SK-N-SH (cell line): ENCODE measurements at regions of chr18 and their contacts with region 1.

Region 1: DNA sequence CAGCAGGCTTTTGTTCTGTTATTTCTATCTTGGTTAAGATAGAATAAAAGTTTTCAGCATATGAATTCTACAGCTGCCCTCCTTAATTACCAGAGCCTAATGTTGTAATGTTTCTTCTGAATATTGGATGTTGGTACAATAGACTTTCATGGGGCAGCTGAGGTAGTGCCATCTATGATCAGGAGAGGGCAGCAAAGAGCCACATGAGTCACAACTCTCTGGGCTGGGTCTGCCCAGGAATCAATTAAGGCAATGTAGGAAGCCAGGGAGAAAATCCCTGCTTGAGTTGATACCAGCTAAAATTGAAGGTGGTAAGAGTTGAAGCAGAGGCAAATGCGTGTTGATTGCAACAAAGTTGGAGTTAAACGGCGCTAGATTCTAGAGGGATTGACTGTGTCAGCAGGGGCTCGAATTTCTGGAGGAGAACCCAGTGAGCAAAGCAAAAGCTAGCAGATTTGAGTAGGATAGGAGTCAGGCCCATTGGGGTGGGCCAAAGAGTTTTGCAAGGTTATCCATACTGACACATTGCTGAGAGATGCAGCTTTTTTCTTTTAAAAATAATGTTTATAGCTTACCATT is 10.6 kb upstream of the MC5R start:
- DNase-seq: peak; percentile 77
- H3K4me3 ChIP-seq: no peak overlapping the region
- H3K27ac ChIP-seq: no peak overlapping the region
- H3K4me1 ChIP-seq: no peaks in the 10 kb centered on the region
- H3K27me3 ChIP-seq: peaks cover 35% of the 10 kb centered on the region; the same call in 1 of the 2 replicates
- CTCF ChIP-seq: peak; percentile 80
- EP300 ChIP-seq: no peak
- RAD21 ChIP-seq: peak; percentile 76

Region 2: GRCh38 chr18:13800505-13801259 is 12.7 kb before region 1 on chr18:
- CTCF ChIA-PET with region 1: interaction called, 38 read pairs
- POLR2A ChIA-PET with region 1: no interaction called
- DNase-seq: peak; percentile 76
- H3K4me3 ChIP-seq: peak overlapping the region; percentile 29 to 52
- H3K27ac ChIP-seq: no peak overlapping the region
- H3K4me1 ChIP-seq: peaks cover 0 to 8% of the 10 kb centered on the region in 2 experiments; a peak in 1 of 4 replicates
- H3K27me3 ChIP-seq: peaks cover 35% of the 10 kb centered on the region
- CTCF ChIP-seq: peak; percentile 41
- EP300 ChIP-seq: no peak
- RAD21 ChIP-seq: peak; percentile 61

Region 3: DNA sequence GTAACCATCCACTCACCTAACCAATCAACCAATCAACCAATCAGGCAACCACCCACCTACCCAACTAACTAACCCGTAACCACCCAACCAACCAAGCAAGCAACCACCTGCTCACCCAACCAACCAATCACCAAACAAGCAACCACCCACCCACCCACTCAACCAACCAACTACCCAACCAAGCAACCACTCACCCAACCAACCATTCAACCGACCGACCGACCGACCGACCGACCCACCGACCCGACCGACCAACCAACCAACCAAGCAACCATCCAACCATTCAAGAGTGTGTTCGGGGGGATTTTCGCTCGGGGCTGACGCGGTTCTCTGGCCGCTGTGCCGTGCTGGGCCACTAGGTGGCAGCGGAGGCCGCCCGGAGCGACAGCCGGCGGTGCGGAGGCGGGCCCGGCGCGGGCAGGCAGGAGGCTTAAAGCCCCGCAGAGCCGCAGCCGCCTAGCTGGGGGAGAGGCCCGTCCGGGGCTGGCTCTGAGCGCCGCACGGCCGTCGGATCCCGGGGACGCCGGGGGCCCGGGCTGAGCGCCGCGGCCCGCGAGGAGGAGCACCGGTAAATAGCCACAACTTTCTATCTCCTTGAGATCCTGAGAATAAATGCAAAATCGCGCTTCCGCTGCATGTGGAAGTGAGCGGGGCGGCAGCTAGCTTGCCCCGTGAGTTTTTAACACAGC is 10.5 kb after region 1 on chr18 and contains the start of gene MC5R:
- CTCF ChIA-PET with region 1: interaction called, 22 read pairs
- POLR2A ChIA-PET with region 1: no interaction called
- DNase-seq: peak; percentile 92
- H3K4me3 ChIP-seq: peak within 1 kb of the TSS; percentile 46 to 66
- H3K27ac ChIP-seq: no peak within 1 kb of the TSS
- H3K4me1 ChIP-seq: no peaks in the 10 kb centered on the region; a peak in 1 of 4 replicates
- H3K27me3 ChIP-seq: peaks cover 63% of the 10 kb centered on the region
- CTCF ChIP-seq: peak; percentile 81
- EP300 ChIP-seq: no peak
- RAD21 ChIP-seq: peak; percentile 82
- polyA plus RNA-seq, gene MC5R: not detected in 2 replicates

Region 4: GRCh38 chr18:13831864-13832508 is 18.6 kb after region 1 on chr18:
- CTCF ChIA-PET with region 1: interaction called, 11 read pairs
- POLR2A ChIA-PET with region 1: no interaction called
- DNase-seq: no peak
- H3K4me3 ChIP-seq: no peak overlapping the region
- H3K27ac ChIP-seq: no peak overlapping the region
- H3K4me1 ChIP-seq: no peaks in the 10 kb centered on the region
- H3K27me3 ChIP-seq: peaks cover 51% of the 10 kb centered on the region; the same call in 1 of the 2 replicates
- CTCF ChIP-seq: peak; percentile 35
- EP300 ChIP-seq: no peak
- RAD21 ChIP-seq: no peak

Region 5: GRCh38 chr18:13871701-13872100 is 58.3 kb after region 1 on chr18:
- CTCF ChIA-PET with region 1: no interaction called
- POLR2A ChIA-PET with region 1: no interaction called
- DNase-seq: no peak
- H3K4me3 ChIP-seq: no peak overlapping the region
- H3K27ac ChIP-seq: no peak overlapping the region
- H3K4me1 ChIP-seq: no peaks in the 10 kb centered on the region
- H3K27me3 ChIP-seq: peaks cover 53% of the 10 kb centered on the region
- CTCF ChIP-seq: no peak
- EP300 ChIP-seq: no peak
- RAD21 ChIP-seq: no peak